Heart left ventricle (tissue), 16 donors: ENCODE measurements at regions of chr6 and their contacts with region 1.

Region 1: DNA sequence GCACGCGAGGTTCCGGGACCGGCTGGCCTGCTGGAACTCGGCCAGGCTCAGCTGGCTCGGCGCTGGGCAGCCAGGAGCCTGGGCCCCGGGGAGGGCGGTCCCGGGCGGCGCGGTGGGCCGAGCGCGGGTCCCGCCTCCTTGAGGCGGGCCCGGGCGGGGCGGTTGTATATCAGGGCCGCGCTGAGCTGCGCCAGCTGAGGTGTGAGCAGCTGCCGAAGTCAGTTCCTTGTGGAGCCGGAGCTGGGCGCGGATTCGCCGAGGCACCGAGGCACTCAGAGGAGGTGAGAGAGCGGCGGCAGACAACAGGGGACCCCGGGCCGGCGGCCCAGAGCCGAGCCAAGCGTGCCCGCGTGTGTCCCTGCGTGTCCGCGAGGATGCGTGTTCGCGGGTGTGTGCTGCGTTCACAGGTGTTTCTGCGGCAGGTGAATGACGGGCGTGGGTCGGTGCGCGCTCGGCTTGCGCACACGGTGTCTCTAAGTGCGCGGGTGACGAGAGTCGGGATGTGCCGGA is at the start of gene CDKN1A:
- DNase-seq: peak; percentile 90 to 95 (median 94)
- ATAC-seq: peak; percentile 77 to 89 (median 82)
- H3K4me3 ChIP-seq: peak within 1 kb of the TSS; percentile 69 to 96 (median 86)
- H3K27ac ChIP-seq: peak within 1 kb of the TSS; percentile 93 to 100 (median 99)
- H3K4me1 ChIP-seq: peaks cover 0 to 68% (median 38%) of the 10 kb centered on the region in 12 donors
- H3K27me3 ChIP-seq: no peaks in the 10 kb centered on the region
- CTCF ChIP-seq: peak in 3 of 12 donors; percentile 8 to 35 (median 13)
- POLR2A ChIP-seq: peak; percentile 94 to 100
- total RNA-seq, gene CDKN1A: 27.5 to 164 (median 99.8) TPM

Region 2: DNA sequence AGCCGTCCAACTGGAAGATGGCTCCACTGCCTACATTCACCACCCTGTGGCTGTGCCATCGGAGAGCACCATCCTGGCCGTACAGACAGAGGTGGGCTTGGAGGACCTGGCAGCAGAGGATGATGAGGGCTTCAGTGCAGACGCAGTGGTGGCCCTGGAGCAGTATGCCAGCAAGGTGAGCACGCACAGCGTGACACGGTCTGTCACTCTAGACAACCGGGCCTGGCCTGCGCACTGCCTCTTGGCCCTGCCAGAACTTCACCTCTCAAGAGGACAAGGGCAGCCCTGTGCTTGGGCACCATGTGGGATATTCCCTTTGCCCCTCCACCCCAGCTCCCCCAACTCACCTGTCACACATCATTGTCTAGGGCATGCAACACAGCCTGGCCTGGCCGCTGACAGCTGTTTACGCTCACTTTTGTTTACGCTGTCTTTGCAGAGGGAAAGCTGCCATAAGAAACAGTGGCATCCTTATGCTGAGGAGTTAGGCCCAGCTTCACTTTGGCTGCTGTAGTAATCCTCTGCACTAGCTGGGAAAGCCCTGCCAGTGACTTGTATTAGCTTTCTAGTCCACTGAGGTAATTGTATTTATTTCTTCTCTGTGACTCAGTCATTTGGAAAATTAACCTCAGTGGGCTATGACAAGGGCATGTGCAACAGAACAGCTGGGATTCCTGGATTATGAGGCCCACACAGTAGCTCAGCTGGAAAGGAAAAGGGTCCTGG is 1390.7 kb before region 1 on chr6:
- intact Hi-C with region 1: no loop called
- DNase-seq: no peak
- ATAC-seq: peak in 1 of 4 donors; percentile 7
- H3K4me3 ChIP-seq: no peak overlapping the region
- H3K27ac ChIP-seq: no peak overlapping the region
- H3K4me1 ChIP-seq: peaks cover 0 to 7% (median 0%) of the 10 kb centered on the region in 12 donors
- H3K27me3 ChIP-seq: no peaks in the 10 kb centered on the region
- CTCF ChIP-seq: no peak
- POLR2A ChIP-seq: no peak

Region 3: DNA sequence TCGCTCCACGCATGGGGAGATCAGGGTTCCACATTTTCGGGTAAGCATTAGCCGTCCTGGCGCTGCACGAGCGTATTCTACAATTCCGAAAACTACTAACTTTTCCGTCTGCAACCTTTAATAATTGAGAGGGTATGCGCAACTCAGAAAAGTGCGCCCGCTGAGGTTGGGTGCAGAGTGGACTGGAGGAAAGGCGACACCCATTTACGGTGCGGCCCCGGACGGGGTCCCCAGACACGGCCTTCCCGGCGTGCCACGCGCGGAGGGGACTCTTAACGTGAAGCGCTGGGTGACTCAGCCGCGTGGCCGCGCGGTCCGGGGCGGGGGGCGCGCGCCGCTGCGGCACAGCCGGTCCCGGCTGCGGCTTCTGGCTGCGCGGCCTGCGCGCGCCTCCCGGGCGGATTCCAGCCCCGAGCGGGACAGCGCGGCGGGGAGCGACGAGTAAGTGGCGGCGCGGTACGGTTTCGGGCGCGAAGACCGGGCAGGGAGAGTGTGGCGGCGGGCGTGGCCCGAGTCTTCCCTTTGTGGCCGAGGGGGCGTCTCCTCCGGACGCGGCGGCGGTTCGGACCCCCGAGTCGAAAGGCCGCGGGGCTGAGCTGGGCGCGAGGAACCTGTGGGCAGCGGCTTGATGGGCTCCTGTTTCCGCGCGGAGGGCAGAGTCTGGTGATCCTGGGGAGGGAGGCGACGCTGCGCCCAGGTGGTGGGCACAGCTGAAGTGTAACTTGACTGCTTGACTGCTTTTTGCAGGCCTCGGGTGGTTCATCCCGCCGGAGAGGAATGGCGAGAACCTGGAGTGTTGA is 235.7 kb before region 1 on chr6 and contains the starts of genes KCTD20 and PXT1:
- intact Hi-C with region 1: loop called in 1 of 10 experiments (anchors 2 kb)
- DNase-seq: peak; percentile 90 to 95 (median 93)
- ATAC-seq: peak; percentile 87 to 94 (median 91)
- H3K4me3 ChIP-seq: peak within 1 kb of the TSS; percentile 78 to 99 (median 89)
- H3K27ac ChIP-seq: peak within 1 kb of the TSS; percentile 85 to 100 (median 98)
- H3K4me1 ChIP-seq: peaks cover 8 to 48% (median 34%) of the 10 kb centered on the region in 12 donors
- H3K27me3 ChIP-seq: no peaks in the 10 kb centered on the region
- CTCF ChIP-seq: no peak
- POLR2A ChIP-seq: peak in 1 of 2 donors; percentile 70
- total RNA-seq, gene KCTD20: 25.0 to 43.9 (median 29.0) TPM
- total RNA-seq, gene PXT1: 0.21 to 0.59 (median 0.40) TPM in 4 of 9 donors, not detected in the others

Region 4: DNA sequence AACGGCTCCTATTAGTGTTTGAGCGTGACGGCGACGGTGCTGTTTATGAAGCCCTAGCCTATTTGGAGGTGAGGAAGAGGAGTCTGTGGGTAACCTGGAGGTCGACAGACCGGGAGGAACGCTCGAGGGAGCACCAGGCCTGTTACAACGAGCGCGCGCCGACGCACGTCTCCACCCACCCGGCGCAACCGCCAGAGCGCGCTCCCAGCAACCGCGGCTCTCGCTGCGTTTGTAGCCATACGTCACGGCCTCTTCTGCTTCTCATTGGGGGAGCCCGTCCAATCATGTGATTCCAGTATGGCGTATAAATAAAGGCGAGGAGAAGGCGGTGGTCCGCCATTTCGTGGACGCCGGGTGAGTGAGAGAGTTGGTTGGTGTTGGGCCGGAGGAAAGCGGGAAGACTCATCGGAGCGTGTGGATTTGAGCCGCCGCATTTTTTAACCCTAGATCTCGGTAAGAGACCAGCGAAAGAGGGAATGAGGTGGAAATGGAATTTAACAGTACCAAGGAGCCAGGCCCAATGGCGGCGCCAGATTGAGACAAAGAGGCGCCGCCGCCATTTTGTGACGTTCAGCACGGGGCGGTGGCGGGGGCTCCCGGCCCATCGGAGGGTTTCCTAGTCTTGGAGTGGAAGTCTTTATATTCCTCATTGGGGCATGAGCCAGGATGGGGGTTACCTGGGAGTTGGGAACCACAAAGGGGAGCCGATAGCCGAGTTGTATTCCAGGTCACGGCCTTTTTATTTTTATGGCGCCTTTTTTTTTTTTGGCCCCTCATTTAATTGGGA is 84.4 kb before region 1 on chr6 and contains the start of gene SRSF3:
- intact Hi-C with region 1: loop called in 1 of 10 experiments (anchors 1 kb)
- DNase-seq: peak; percentile 97 to 98 (median 98)
- ATAC-seq: peak; percentile 96 to 99 (median 97)
- H3K4me3 ChIP-seq: peak within 1 kb of the TSS; percentile 64 to 83 (median 74)
- H3K27ac ChIP-seq: peak within 1 kb of the TSS; percentile 87 to 100 (median 97)
- H3K4me1 ChIP-seq: peaks cover 4 to 41% (median 30%) of the 10 kb centered on the region in 12 donors
- H3K27me3 ChIP-seq: no peaks in the 10 kb centered on the region
- CTCF ChIP-seq: peak; percentile 43 to 85 (median 55)
- POLR2A ChIP-seq: peak in 1 of 2 donors; percentile 95
- total RNA-seq, gene SRSF3: 43.2 to 162 (median 111) TPM

Region 5: DNA sequence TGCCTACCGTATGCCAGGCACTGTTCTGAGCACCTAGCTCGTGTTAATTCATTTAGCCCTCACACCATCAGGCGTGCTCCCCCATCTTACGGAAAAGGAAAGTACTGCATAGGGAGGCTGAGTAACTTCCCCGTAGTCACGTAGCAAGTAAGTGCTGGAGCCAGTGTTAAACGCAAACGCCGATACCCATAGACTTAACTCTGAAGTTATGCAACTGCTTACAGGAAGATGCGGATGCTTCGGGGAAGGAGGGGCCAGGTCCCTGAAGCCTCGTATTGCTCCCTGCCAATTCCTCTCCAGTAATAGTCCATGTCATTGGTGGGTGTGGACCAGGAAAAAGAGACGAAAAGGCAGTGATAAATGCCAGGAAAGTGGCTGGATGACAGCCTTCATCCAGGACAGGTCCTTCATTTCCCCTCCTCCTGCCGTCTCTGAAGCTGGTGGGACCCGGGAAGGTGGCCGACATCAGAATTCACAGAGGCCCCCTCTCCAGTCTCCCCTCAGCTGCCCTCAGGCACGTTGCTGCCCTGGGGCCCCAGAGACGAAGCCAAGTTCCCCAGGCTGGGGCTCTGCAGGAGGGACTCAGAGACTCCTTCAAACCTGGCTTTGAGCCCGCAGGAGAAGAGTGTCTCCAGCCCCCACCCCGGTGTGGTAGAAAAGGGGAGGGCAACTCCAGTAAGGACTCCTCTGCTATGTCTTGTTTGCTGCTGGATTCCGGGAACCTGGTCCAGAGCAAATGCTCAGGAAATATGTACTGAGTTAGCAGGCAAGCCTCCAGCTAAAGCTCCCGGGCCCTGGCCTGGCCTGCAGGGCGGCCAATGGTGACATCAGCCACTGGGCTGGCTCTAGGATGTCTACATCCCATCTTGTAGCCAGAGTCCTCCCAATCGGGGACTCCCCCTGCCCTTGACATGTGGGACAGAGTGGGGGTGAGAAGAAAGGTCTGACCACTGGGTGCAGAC is 56.8 kb after region 1 on chr6:
- intact Hi-C with region 1: loop called in 1 of 10 experiments (anchors 5 kb)
- DNase-seq: peak; percentile 84 to 88 (median 87)
- ATAC-seq: peak; percentile 83 to 91 (median 86)
- H3K4me3 ChIP-seq: peak overlapping the region in 10 of 12 donors; percentile 12 to 54 (median 38)
- H3K27ac ChIP-seq: peak overlapping the region; percentile 70 to 93 (median 82)
- H3K4me1 ChIP-seq: peaks cover 0 to 27% (median 16%) of the 10 kb centered on the region in 12 donors
- H3K27me3 ChIP-seq: no peaks in the 10 kb centered on the region
- CTCF ChIP-seq: peak in 1 of 12 donors; percentile 8
- POLR2A ChIP-seq: no peak

Region 6: GRCh38 chr6:36929607-36930006 is 251.0 kb after region 1 on chr6:
- intact Hi-C with region 1: no loop called
- DNase-seq: no peak
- ATAC-seq: peak in 1 of 4 donors; percentile 28
- H3K4me3 ChIP-seq: no peak overlapping the region
- H3K27ac ChIP-seq: peak overlapping the region in 4 of 12 donors; percentile 19 to 70 (median 56)
- H3K4me1 ChIP-seq: peaks cover 0 to 43% (median 16%) of the 10 kb centered on the region in 12 donors
- H3K27me3 ChIP-seq: no peaks in the 10 kb centered on the region
- CTCF ChIP-seq: no peak
- POLR2A ChIP-seq: no peak